CD4-positive, alpha-beta memory T cell (primary cell): ENCODE measurements at regions of chr22 and their contacts with region 1.

Region 1: DNA sequence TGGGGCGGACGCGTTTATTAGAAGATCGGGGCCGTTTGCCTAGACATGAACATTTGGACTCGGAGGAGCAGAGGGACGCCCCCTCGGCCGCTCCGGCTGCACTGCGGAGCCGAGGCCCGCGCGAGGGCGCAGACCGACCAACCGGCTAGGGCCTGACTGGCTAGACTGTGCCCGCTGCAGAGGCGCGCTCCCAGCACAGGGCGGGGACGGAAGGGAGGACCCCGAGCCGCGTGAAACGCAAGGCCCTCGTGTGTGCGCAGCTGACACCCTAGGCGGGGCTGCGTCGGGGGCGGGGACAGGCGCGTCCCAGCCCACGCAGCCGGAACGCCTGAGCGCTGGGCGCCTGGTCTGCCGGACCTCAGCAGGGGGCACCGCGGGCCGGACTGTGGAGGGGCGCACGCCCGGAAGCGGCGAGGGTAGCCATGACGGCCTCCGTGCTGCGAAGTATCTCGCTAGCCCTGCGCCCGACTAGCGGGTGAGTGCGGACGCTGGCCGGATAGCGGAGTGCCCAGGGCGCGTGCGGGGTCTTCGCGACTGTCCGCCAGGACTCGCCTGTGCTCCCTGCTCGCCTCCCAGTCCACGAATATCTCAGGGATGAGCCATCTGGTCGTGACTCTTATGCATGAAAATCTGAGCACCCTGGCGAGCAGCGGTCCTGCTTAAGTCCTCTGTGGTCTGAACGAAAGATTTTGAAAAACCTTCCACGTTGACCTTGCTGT is at the start of gene MRPL40:
- DNase-seq: peak; percentile 80 to 88 (median 82)
- H3K4me3 ChIP-seq: peak within 1 kb of the TSS; percentile 88 to 97
- H3K4me3 Mint-ChIP-seq: peak within 1 kb of the TSS; percentile 87 to 97 (median 90)
- H3K27ac ChIP-seq: peak within 1 kb of the TSS; percentile 81
- H3K27ac Mint-ChIP-seq: peak within 1 kb of the TSS; percentile 90 to 96 (median 92)
- H3K4me1 ChIP-seq: peaks cover 43% of the 10 kb centered on the region
- H3K4me1 Mint-ChIP-seq: peaks cover 23 to 48% (median 34%) of the 10 kb centered on the region in 4 donors
- H3K27me3 ChIP-seq: no peaks in the 10 kb centered on the region
- H3K27me3 Mint-ChIP-seq: no peaks in the 10 kb centered on the region
- total RNA-seq, gene MRPL40: 16.2 to 16.8 TPM

Region 2: DNA sequence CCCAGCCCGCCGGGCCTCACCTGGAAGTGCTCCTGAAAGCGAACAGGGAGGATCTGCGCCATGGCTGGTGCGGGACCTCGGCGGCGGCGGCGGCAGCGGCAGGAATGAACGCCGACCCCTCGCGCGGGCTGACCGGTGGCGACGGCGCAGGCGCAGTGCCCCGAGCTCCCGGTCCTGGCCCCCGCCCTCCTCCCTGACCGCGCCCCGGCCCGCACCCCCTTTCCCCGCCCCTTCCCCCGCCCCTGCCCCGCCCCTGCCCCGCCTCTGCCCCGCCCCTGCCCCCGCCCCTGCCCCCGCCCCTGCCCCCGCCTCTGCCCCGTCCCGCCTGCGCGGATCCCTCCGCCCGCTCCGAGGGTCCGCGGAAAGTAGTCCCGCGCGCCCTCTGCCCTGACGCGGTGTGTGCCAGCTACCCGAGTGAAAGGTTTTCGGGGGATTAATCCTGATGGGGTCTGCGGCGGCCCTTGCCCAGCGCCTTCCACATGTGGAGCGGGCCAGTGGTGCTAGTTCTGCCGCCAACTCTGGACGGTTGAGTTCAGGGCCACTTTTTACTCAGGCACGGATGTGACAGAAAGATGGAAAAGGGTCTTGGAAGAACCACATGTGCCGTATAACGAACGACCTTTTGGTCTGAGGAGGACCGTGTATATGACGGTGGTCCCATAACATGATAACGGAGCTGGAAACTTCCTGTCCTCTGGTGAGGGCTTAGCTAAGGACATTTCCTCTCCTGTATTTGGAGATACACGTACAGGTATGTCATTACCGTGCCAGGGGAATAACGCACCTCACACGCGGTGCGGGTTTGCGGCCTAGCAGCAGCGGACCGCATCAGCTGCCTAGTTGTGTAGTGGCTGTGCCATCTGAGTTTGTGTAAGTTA is 140.5 kb before region 1 on chr22 and contains the start of gene CLTCL1:
- CTCF ChIA-PET with region 1: no interaction called
- POLR2A ChIA-PET with region 1: interaction called, 6 read pairs
- intact Hi-C with region 1: loop called (anchors 2 kb)
- DNase-seq: peak; percentile 49 to 73 (median 62)
- H3K4me3 ChIP-seq: peak within 1 kb of the TSS; percentile 43 to 92
- H3K4me3 Mint-ChIP-seq: peak within 1 kb of the TSS; percentile 87 to 93 (median 91)
- H3K27ac ChIP-seq: peak within 1 kb of the TSS; percentile 58
- H3K27ac Mint-ChIP-seq: peak within 1 kb of the TSS; percentile 42 to 92 (median 88)
- H3K4me1 ChIP-seq: peaks cover 25% of the 10 kb centered on the region
- H3K4me1 Mint-ChIP-seq: peaks cover 12 to 31% (median 21%) of the 10 kb centered on the region in 4 donors
- H3K27me3 ChIP-seq: no peaks in the 10 kb centered on the region
- H3K27me3 Mint-ChIP-seq: peaks cover 7 to 17% of the 10 kb centered on the region in 2 donors
- total RNA-seq, gene CLTCL1: 0.80 to 1.7 TPM

Region 3: GRCh38 chr22:19419464-19420178 is 12.7 kb before region 1 on chr22:
- CTCF ChIA-PET with region 1: no interaction called
- POLR2A ChIA-PET with region 1: interaction called, 27 read pairs
- intact Hi-C with region 1: no loop called
- DNase-seq: peak; percentile 56 to 74 (median 63)
- H3K4me3 ChIP-seq: no peak overlapping the region
- H3K4me3 Mint-ChIP-seq: peak overlapping the region; percentile 34 to 74 (median 58)
- H3K27ac ChIP-seq: peak overlapping the region; percentile 60
- H3K27ac Mint-ChIP-seq: peak overlapping the region; percentile 76 to 94 (median 92)
- H3K4me1 ChIP-seq: peaks cover 59% of the 10 kb centered on the region
- H3K4me1 Mint-ChIP-seq: peaks cover 53 to 78% (median 64%) of the 10 kb centered on the region in 4 donors
- H3K27me3 ChIP-seq: no peaks in the 10 kb centered on the region
- H3K27me3 Mint-ChIP-seq: no peaks in the 10 kb centered on the region

Region 4: DNA sequence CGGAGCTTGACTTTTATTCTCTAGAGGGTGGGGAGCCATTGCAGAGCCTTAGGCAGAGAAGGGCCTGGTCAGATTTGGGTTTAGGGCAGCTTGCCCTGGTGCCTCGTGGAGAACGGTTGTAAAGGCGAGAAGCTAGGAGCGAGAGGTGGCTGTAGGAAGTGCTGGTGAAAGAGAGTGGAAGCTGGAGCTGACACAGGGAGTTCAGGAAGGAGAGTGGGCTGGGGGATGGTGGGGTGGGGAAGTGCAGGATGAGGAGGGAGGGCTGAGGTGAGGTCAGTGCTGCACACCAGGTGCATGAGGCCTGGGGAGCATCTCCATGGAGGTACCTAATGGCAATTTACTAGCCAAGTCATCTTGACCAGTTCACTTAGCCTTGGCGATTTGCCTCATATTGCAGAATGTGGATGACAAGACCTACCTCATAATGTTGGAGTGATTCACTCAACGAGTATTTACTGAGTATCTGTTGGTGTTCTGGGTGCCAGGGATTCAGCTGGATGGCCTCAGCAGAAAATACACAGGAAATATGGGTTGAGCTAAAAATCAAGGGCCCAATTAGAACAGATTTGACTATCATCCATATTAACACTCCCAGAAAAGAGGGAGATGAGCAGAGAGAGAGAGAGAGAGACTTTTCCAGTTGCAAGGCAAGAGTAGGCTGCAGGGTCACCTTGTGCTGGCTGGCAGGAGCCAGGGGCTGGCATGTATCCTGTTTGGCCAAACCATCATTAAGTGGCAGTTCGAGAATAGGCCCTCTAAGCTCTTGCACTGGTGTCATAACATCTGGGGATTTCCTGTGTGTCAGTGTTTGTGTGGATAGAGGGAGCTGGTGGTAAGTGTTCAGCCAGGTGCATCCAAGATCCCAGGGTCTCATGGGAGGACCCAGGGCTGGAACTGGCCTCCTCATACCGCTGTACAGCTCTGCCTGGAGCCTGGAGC is 136.3 kb after region 1 on chr22:
- CTCF ChIA-PET with region 1: no interaction called
- POLR2A ChIA-PET with region 1: no interaction called
- intact Hi-C with region 1: no loop called
- DNase-seq: no peak
- H3K4me3 ChIP-seq: no peak overlapping the region
- H3K4me3 Mint-ChIP-seq: no peak overlapping the region
- H3K27ac ChIP-seq: no peak overlapping the region
- H3K27ac Mint-ChIP-seq: peak overlapping the region in 3 of 7 donors; percentile 44 to 53 (median 48)
- H3K4me1 ChIP-seq: no peaks in the 10 kb centered on the region
- H3K4me1 Mint-ChIP-seq: peaks cover 0 to 3% (median 0%) of the 10 kb centered on the region in 4 donors
- H3K27me3 ChIP-seq: no peaks in the 10 kb centered on the region
- H3K27me3 Mint-ChIP-seq: peaks cover 0 to 6% of the 10 kb centered on the region in 2 donors